ENCODE measurements at regions of chr4 and their contacts with region 1.

Region 1: GRCh38 chr4:151389311-151389710 is 19.7 kb upstream of the FHIP1A start:
- DNase-seq: no peak
- H3K4me3 ChIP-seq: no peak overlapping the region
- H3K27ac ChIP-seq: no peak overlapping the region
- H3K4me1 ChIP-seq: no peaks in the 10 kb centered on the region
- H3K27me3 ChIP-seq: no peaks in the 10 kb centered on the region
- CTCF ChIP-seq: no peak

Region 2: GRCh38 chr4:151376540-151376939 is 12.8 kb before region 1 on chr4:
- CTCF ChIA-PET with region 1: no interaction called
- POLR2A ChIA-PET with region 1: no interaction called
- intact Hi-C with region 1: no loop called
- DNase-seq: no peak
- H3K4me3 ChIP-seq: no peak overlapping the region
- H3K27ac ChIP-seq: no peak overlapping the region
- H3K4me1 ChIP-seq: no peaks in the 10 kb centered on the region
- H3K27me3 ChIP-seq: no peaks in the 10 kb centered on the region
- CTCF ChIP-seq: no peak

Region 3: DNA sequence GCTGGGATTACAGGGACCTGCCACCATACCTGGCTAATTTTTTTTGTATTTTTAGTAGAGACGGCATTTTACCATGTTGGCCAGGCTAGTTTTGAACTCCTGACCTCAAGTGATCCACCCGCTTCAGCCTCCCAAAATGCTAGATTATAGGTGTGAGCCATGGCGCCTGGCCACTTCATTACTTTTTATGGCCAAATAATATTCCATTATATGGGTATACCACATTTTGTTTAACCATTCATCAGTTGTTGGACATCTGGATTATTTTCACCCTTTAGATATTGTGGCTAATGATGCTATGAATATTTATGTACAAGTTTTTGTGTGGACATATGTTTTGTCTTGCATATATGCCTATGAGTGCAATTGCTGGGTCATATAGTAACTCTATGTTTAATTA is 11.0 kb after region 1 on chr4:
- CTCF ChIA-PET with region 1: interaction called, 12 read pairs
- POLR2A ChIA-PET with region 1: interaction called, 3 read pairs
- intact Hi-C with region 1: no loop called
- DNase-seq: no peak
- H3K4me3 ChIP-seq: no peak overlapping the region
- H3K27ac ChIP-seq: no peak overlapping the region
- H3K4me1 ChIP-seq: no peaks in the 10 kb centered on the region
- H3K27me3 ChIP-seq: no peaks in the 10 kb centered on the region
- CTCF ChIP-seq: no peak